Mucosa of descending colon (tissue), 3 donors: ENCODE measurements at regions of chr15 and their contacts with region 1.

Region 1: GRCh38 chr15:59611276-59612260 is at the start of gene GCNT3:
- DNase-seq: peak in 1 of 3 donors; percentile 57
- ATAC-seq: peak; percentile 82
- H3K4me3 ChIP-seq: peak within 1 kb of the TSS; percentile 7
- H3K4me1 ChIP-seq: no peaks in the 10 kb centered on the region
- CTCF ChIP-seq: no peak
- total RNA-seq, gene GCNT3: 239 to 506 (median 426) TPM

Region 2: DNA sequence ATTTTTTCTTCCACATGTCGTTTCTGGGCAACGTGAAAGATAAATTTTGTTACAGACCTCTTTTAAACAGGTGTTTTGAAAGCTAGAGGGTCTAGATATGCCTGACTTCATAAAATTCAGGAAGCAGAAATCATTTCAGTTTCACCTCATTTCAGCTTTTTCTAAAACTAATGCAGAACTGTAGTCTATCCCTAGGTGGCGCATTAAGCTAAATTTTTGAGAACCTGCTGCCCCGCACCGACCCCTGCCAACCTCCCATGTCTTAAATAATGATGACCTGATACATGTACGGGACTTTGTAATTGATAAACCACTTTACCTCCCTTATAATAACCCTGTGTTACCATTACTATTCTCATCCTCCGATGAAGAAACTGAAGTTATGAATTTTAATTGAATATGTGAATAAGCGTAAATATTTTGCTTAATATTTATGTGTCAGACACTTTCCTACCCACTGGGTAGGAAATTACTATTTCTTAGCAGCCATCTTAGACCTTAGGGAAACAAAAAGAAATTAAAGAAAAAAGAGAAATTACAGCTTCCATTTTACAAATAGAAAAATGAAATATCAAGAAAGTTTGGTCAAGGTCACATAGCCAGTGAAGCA is 78.7 kb before region 1 on chr15:
- intact Hi-C with region 1: loop called in 1 of 2 experiments (anchors 10 kb)
- DNase-seq: peak in 1 of 3 donors; percentile 64
- ATAC-seq: peak; percentile 46
- H3K4me3 ChIP-seq: no peak overlapping the region
- H3K4me1 ChIP-seq: peaks cover 19% of the 10 kb centered on the region
- CTCF ChIP-seq: peak; percentile 49

Region 3: DNA sequence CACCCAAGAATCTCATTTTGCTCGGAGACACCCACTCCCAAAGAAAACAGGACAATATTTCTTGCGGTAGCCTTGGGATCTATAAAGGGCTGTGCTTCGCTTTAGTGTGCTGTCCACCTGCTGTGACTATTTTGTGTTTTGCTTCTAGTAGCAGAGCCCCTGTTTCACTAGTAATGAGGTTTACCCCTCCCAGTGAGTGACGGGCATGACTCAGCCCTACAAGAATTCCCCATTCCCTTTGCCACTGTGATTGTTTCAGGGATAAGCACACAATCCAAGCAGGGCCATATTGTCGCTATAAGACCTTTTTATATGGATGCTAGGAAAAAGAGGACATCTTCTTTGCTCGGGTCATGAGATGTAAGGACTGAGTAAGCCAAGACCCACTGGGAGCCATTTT is 330.0 kb after region 1 on chr15:
- intact Hi-C with region 1: no loop called
- DNase-seq: no peak
- ATAC-seq: no peak
- H3K4me3 ChIP-seq: no peak overlapping the region
- H3K4me1 ChIP-seq: no peaks in the 10 kb centered on the region
- CTCF ChIP-seq: no peak